Panc1 (cell line): ENCODE measurements at regions of chr7 and their contacts with region 1.

Region 1: GRCh38 chr7:70720191-70720873 is 411.6 kb upstream of the GALNT17 start:
- DNase-seq: no peak
- ATAC-seq: no peak
- H3K4me3 ChIP-seq: no peak overlapping the region
- H3K27ac ChIP-seq: no peak overlapping the region
- H3K4me1 ChIP-seq: no peaks in the 10 kb centered on the region
- H3K27me3 ChIP-seq: no peaks in the 10 kb centered on the region
- CTCF ChIP-seq: no peak

Region 2: GRCh38 chr7:70736715-70737460 is 16.6 kb after region 1 on chr7:
- CTCF ChIA-PET with region 1: interaction called, 10 read pairs
- POLR2A ChIA-PET with region 1: no interaction called
- in situ Hi-C with region 1: no loop called
- intact Hi-C with region 1: no loop called
- DNase-seq: no peak
- ATAC-seq: no peak
- H3K4me3 ChIP-seq: peak overlapping the region; percentile 24
- H3K27ac ChIP-seq: no peak overlapping the region
- H3K4me1 ChIP-seq: no peaks in the 10 kb centered on the region; the same call in 1 of the 2 replicates
- H3K27me3 ChIP-seq: no peaks in the 10 kb centered on the region; the same call in 1 of the 2 replicates
- CTCF ChIP-seq: no peak